Left cardiac atrium (tissue), 4 donors: ENCODE measurements at regions of chr2 and their contacts with region 1.

Region 1: DNA sequence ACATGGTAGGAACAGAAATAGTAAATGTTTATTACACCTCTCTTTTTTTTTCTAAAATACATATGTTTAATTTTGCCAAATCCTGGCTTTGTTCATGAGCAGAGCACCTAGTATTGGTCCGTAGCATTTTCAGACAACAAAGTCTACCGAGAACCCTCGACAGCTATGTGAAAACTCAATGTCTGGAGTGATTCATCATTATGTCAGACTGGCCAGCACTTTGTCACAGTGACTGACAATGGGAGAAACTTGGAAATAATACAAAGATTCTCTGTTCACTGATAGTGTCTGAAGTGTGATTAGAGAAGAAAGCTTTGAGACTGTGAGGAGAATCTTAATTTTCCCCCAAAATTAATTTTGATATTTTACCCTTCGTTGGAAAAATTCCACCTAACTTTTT is 143.0 kb downstream of the HNMT start:
- DNase-seq: no peak
- ATAC-seq: peak in 1 of 2 donors; percentile 46

Region 2: DNA sequence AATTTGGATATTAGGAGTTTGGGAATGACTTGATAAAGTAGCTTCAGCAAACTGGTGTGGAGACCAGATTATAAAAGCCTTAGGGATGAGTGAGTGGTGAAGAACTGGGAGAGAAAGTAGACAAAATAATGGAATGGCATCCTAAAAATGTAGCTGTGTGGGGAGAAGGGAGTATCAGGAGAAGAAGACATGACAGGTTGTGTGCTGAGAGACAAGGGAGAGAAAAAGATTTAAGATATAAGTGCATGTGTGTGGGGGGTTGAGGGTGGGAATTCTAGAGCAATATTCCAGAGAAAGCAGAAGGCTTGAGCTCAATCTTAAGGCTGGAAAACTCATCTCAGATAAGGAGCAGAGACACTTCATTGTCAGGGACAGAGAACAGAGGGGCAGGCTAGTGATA is 16.4 kb after region 1 on chr2:
- intact Hi-C with region 1: loop called in 1 of 2 experiments (anchors 1 kb)
- DNase-seq: no peak
- ATAC-seq: no peak

Region 3: DNA sequence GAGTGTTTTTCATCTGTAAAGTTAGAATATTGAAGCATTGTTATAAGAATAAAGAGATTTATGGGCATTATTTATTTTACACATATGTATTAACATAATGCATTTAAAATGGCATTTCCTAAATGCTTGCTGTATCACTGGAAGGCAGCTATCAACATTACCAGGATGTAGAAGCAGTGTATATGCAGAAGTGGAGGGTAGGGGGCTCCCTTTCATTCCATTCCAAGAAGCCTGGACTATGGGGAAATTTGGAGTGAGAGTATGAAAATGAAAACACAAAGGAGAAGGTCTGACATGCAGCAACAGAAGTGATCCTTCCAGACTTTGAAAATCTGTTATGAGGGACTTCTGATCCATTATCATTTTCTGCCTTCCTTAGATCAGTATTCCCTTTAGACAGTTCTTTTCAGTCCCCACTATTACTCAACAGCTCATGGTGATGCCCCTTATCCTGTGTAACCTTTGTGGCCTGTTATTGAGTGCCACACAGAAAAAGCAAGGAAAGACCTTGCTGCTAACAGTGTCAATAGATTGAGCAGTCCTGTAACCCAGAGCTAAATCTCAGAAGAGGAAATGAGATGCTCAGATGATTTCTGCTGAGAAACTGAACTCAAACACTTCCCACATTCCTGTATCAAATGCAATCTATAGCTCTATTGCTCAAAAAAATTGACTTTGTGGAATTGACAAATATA is 73.5 kb after region 1 on chr2:
- intact Hi-C with region 1: no loop called
- DNase-seq: no peak
- ATAC-seq: no peak